OCI-LY7 (cell line): ENCODE measurements at regions of chr1 and their contacts with region 1.

Region 1: DNA sequence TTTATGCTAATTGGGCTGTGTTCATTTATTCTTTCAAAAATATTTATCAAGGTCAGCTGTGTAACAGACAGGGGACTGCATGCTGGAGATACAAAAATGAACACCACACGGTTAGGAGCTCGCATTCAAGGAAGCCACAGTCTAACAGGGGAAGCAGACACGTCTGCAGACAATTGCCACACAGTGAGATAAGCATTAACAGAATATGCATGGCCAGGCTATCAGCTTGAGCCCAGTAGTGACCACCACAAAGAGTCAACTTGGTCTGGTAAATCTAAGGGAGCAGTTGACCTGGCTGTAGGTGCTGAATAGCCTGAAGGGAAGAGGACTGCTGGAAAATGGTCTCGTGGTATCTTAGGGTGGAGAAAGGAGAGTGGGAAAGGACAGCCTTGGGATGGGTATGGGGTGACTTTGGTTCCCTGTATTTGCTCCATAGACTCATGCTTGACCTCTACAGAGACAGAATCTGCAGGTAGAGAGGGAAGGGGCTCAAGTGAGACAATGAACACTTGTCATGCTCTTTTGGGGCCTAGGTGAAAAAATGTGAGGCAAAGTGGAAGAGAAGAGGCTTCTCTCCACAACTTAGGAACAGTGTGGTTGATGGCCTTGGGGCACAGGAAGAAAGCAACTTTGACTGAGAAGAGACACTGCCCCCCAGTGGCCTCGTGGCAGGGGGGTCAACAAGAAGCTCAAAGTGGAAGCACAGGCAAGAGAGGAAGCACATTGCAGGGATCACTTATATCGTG is 7.6 kb upstream of the NPL start:
- DNase-seq: peak; percentile 86
- H3K4me3 ChIP-seq: no peak overlapping the region
- H3K27ac ChIP-seq: no peak overlapping the region
- H3K4me1 ChIP-seq: peaks cover 31% of the 10 kb centered on the region
- CTCF ChIP-seq: peak; percentile 98

Region 2: GRCh38 chr1:182084487-182085316 is 697.3 kb before region 1 on chr1:
- CTCF ChIA-PET with region 1: no interaction called
- POLR2A ChIA-PET with region 1: no interaction called
- intact Hi-C with region 1: loop called (anchors 5 kb)
- DNase-seq: peak; percentile 47
- H3K4me3 ChIP-seq: no peak overlapping the region
- H3K27ac ChIP-seq: no peak overlapping the region
- H3K4me1 ChIP-seq: no peaks in the 10 kb centered on the region
- CTCF ChIP-seq: peak; percentile 69

Region 3: GRCh38 chr1:182278144-182279054 is 503.6 kb before region 1 on chr1:
- CTCF ChIA-PET with region 1: no interaction called
- POLR2A ChIA-PET with region 1: no interaction called
- intact Hi-C with region 1: no loop called
- DNase-seq: no peak
- H3K4me3 ChIP-seq: no peak overlapping the region
- H3K27ac ChIP-seq: no peak overlapping the region
- H3K4me1 ChIP-seq: no peaks in the 10 kb centered on the region
- CTCF ChIP-seq: no peak

Region 4: GRCh38 chr1:182446033-182446669 is 335.9 kb before region 1 on chr1:
- CTCF ChIA-PET with region 1: no interaction called
- POLR2A ChIA-PET with region 1: no interaction called
- intact Hi-C with region 1: loop called (anchors 1 kb)
- DNase-seq: peak; percentile 67
- H3K4me3 ChIP-seq: no peak overlapping the region
- H3K27ac ChIP-seq: no peak overlapping the region
- H3K4me1 ChIP-seq: no peaks in the 10 kb centered on the region
- CTCF ChIP-seq: peak; percentile 96

Region 5: DNA sequence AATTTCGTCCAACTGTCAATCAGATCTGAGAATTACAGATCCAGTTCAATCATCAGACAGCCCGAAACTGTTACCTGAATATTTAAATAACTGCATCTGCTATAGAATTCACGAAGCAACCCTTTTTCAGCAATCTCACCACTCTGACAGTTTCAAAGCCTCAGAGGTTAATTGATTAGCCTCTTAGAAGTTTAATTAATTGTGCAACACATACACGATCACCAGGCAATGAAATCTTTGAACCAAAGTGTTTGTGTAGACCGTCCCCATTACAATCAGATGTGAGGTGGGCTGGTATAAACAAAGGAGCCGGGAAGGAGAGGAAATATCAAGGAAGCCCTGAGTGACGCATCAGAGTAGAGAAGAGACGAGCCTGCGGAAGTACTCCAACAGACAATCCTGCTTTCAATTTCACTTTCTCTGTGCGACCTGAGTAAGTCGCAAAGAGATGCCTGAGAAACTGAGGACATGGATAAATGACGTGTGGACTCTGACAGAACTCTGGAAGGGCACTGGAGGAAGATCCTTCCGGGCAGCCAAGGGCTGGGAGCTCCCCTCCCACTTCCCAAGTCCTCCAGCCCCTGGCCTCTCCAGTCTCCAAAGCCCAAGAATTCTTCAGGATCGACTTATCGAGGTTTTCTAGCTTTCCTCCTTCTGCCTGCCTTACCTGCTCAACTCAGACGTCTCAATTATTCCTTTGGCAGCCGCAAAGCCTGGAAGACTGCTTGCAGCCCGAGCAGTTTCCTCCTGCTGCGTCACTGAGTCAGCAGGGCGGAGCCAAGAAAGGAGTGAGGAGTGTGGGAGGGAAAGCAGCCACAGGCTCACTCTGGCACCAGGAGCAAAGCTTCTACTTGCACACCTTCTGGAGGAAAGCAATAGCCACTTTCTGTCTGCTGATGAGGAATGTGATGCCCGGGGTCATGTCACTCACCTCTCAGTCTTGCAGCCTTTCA is 193.2 kb before region 1 on chr1 and contains the start of gene RNASEL:
- CTCF ChIA-PET with region 1: interaction called, 189 read pairs
- POLR2A ChIA-PET with region 1: interaction called, 26 read pairs
- intact Hi-C with region 1: no loop called
- DNase-seq: peak; percentile 57
- H3K4me3 ChIP-seq: peak within 1 kb of the TSS; percentile 71
- H3K27ac ChIP-seq: peak within 1 kb of the TSS; percentile 34
- H3K4me1 ChIP-seq: peaks cover 15% of the 10 kb centered on the region
- CTCF ChIP-seq: no peak
- total RNA-seq, gene RNASEL: 1.3 and 2.2 TPM in 2 replicates

Region 6: DNA sequence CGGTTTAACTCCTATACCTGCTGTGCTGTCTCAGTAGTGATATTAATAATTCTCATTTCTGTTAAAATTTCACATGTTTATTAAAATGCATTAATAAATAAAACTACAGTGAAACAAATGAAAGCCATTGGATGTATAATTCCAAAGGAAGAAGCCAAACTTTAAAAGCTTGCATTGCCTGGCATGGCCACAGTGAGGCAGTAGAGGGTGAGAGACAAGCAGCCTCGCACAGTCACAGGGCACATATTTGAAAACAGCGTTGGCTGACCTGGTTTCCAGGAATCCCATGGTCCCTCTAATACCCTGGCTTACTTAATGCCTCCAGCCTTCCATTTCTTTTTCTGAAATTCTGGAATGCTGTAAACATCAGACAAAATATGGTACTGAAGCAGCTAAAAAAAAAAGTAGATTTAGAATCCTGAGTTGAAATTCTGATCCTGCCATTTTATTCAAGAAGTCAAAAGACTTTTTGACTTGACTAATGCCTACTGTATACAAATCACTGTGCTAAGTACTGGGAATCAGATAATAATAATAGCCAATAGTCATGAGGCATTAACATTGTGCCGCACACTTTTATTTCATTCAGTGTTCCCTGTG is 186.3 kb before region 1 on chr1:
- CTCF ChIA-PET with region 1: interaction called, 189 read pairs
- POLR2A ChIA-PET with region 1: interaction called, 26 read pairs
- intact Hi-C with region 1: loop called (anchors 1 kb)
- DNase-seq: peak; percentile 63
- H3K4me3 ChIP-seq: no peak overlapping the region
- H3K27ac ChIP-seq: no peak overlapping the region
- H3K4me1 ChIP-seq: peaks cover 18% of the 10 kb centered on the region
- CTCF ChIP-seq: peak; percentile 99

Region 7: GRCh38 chr1:182604169-182605164 is 177.5 kb before region 1 on chr1 and contains the start of gene RGS16:
- CTCF ChIA-PET with region 1: interaction called, 189 read pairs
- POLR2A ChIA-PET with region 1: interaction called, 10 read pairs
- intact Hi-C with region 1: loop called (anchors 1 kb)
- DNase-seq: peak; percentile 96
- H3K4me3 ChIP-seq: peak within 1 kb of the TSS; percentile 80
- H3K27ac ChIP-seq: peak within 1 kb of the TSS; percentile 47
- H3K4me1 ChIP-seq: peaks cover 59% of the 10 kb centered on the region
- CTCF ChIP-seq: no peak
- total RNA-seq, gene RGS16: 17.9 and 20.1 TPM in 2 replicates

Region 8: GRCh38 chr1:182649041-182649440 is 133.0 kb before region 1 on chr1:
- CTCF ChIA-PET with region 1: interaction called, 3 read pairs
- POLR2A ChIA-PET with region 1: interaction called, 5 read pairs
- intact Hi-C with region 1: loop called (anchors 1 kb)
- DNase-seq: peak; percentile 45
- H3K4me3 ChIP-seq: peak overlapping the region; percentile 35
- H3K27ac ChIP-seq: peak overlapping the region; percentile 53
- H3K4me1 ChIP-seq: peaks cover 71% of the 10 kb centered on the region
- CTCF ChIP-seq: 0 out of 2 replicates have a peak, but pooled peaks have one; percentile 30